AG04450 (cell line): ENCODE measurements at regions of chr6 and their contacts with region 1.

Region 1: GRCh38 chr6:86856937-86857563 is 80.3 kb upstream of the HTR1E start:
- DNase-seq: no peak
- H3K4me3 ChIP-seq: no peak overlapping the region
- H3K27ac ChIP-seq: no peak overlapping the region
- H3K27me3 ChIP-seq: no peaks in the 10 kb centered on the region
- CTCF ChIP-seq: peak; percentile 63

Region 2: GRCh38 chr6:85923013-85923430 is 934.0 kb before region 1 on chr6:
- CTCF ChIA-PET with region 1: interaction called, 11 read pairs
- POLR2A ChIA-PET with region 1: no interaction called
- DNase-seq: peak; percentile 6
- H3K4me3 ChIP-seq: no peak overlapping the region
- H3K27ac ChIP-seq: no peak overlapping the region
- H3K27me3 ChIP-seq: no peaks in the 10 kb centered on the region
- CTCF ChIP-seq: peak; percentile 71